HCT116 (cell line): ENCODE measurements at regions of chr19 and their contacts with region 1.

Region 1: GRCh38 chr19:37979547-37980082 is 72.6 kb downstream of the SIPA1L3 start:
- DNase-seq: no peak
- ATAC-seq: peak; percentile 76
- H3K4me3 ChIP-seq: peak overlapping the region in 1 of 2 experiments; percentile 31; a peak in 1 of 4 replicates
- H3K27ac ChIP-seq: peak overlapping the region; percentile 65
- H3K4me1 ChIP-seq: peaks cover 48 to 71% of the 10 kb centered on the region in 2 experiments
- H3K27me3 ChIP-seq: no peaks in the 10 kb centered on the region
- CTCF ChIP-seq: no peak
- POLR2A ChIP-seq: no peak
- RAD21 ChIP-seq: no peak

Region 2: DNA sequence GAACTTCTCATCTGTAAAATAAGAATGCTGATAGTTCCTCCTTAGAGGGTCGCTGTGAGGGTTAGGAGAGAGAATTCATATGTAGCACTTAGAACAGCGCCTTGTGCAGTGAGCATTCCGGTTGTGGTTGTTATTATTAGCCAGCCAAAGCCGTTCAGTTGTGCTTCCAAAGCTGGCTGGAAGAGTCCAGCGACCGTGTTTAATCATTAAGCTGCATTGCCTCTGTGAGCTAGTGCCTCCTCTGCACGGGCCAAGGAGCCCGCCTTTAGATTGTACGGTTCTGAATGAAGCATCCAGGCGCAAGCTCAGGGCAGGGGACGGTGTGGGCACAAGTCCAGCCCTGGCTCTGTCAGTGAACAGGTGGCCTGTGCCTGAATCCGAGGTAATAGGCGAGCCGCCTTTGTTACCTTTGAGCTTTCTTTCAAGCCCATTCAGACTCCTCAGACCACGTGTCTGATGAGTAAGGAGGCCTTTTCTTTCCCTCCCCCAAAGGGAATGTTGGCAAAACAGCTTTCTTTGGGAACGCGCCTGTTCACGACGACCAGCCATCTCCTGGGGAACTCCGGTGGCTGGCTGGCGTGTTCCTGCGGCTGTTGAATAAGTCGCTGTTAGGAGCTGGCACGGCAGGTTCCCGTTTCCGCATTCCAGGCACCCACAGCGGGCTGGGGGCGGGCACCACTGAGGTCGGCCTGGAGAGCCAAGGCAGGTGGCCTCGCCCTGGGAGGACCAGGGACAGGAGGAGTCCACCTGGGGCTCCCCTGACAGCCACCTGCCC is 47.5 kb before region 1 on chr19:
- CTCF ChIA-PET with region 1: no interaction called
- POLR2A ChIA-PET with region 1: no interaction called
- RAD21 ChIA-PET with region 1: no interaction called
- intact Hi-C with region 1: loop called (anchors 10 kb)
- DNase-seq: peak; percentile 65
- ATAC-seq: peak; percentile 81
- H3K4me3 ChIP-seq: peak overlapping the region; percentile 30 to 49
- H3K27ac ChIP-seq: peak overlapping the region; percentile 88
- H3K4me1 ChIP-seq: peaks cover 61 to 87% of the 10 kb centered on the region in 2 experiments
- H3K27me3 ChIP-seq: no peaks in the 10 kb centered on the region
- CTCF ChIP-seq: no peak
- POLR2A ChIP-seq: no peak
- RAD21 ChIP-seq: peak; percentile 39; the same call in 1 of the 2 replicates